ENCODE measurements at regions of chr13 and their contacts with region 1.

Region 1: GRCh38 chr13:90968166-90968904 is 379.2 kb upstream of the MIR17HG start:
- DNase-seq: peak; percentile 33 to 44
- ATAC-seq: peak; percentile 97
- H3K4me3 ChIP-seq: no peak overlapping the region
- H3K27ac ChIP-seq: peak overlapping the region; percentile 8 to 68; a peak in 3 of 6 replicates
- H3K4me1 ChIP-seq: peaks cover 13% of the 10 kb centered on the region; the same call in 1 of the 3 replicates
- CTCF ChIP-seq: peak; percentile 65
- EP300 ChIP-seq: no peak
- POLR2A ChIP-seq: no peak
- RAD21 ChIP-seq: peak; percentile 77 to 84

Region 2: GRCh38 chr13:90867336-90867683 is 101.0 kb before region 1 on chr13:
- CTCF ChIA-PET with region 1: interaction called, 14 read pairs
- POLR2A ChIA-PET with region 1: no interaction called
- DNase-seq: peak; percentile 14 to 75
- ATAC-seq: peak; percentile 77 to 93; a peak in 5 of 6 replicates
- H3K4me3 ChIP-seq: no peak overlapping the region
- H3K27ac ChIP-seq: no peak overlapping the region
- H3K4me1 ChIP-seq: peaks cover 3% of the 10 kb centered on the region; the same call in 1 of the 3 replicates
- CTCF ChIP-seq: peak; percentile 43; the same call in 2 of the 3 replicates
- EP300 ChIP-seq: no peak
- POLR2A ChIP-seq: no peak
- RAD21 ChIP-seq: peak; percentile 65 to 79

Region 3: DNA sequence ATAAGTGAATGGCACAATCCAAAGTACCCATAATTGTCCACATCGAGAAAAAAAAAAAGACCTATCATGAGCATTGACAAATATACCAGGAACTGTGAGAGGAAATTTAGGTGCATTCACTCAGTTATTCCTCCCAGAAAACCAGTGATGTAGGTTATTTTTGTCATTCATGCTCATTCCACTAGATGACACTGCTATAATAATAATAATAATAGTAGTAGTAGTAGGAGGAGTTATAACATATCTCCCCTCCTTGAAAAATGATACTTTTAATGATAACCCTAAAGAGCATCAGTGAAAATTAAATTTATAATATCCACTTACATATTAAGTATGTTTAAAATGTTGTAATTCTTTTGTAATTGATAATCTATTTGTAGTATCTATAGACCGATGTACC is 84.7 kb before region 1 on chr13:
- CTCF ChIA-PET with region 1: interaction called, 12 read pairs
- POLR2A ChIA-PET with region 1: no interaction called
- DNase-seq: no peak
- ATAC-seq: no peak
- H3K4me3 ChIP-seq: no peak overlapping the region
- H3K27ac ChIP-seq: no peak overlapping the region
- H3K4me1 ChIP-seq: no peaks in the 10 kb centered on the region
- CTCF ChIP-seq: peak; percentile 31; the same call in 2 of the 3 replicates
- EP300 ChIP-seq: no peak
- POLR2A ChIP-seq: no peak
- RAD21 ChIP-seq: peak; percentile 49 to 56